ENCODE measurements at regions of chr7 and their contacts with region 1.

Region 1: GRCh38 chr7:73557108-73557396 is 438 bp downstream of the BCL7B start:
- DNase-seq: peak; percentile 80 to 99 (median 90)

Region 2: DNA sequence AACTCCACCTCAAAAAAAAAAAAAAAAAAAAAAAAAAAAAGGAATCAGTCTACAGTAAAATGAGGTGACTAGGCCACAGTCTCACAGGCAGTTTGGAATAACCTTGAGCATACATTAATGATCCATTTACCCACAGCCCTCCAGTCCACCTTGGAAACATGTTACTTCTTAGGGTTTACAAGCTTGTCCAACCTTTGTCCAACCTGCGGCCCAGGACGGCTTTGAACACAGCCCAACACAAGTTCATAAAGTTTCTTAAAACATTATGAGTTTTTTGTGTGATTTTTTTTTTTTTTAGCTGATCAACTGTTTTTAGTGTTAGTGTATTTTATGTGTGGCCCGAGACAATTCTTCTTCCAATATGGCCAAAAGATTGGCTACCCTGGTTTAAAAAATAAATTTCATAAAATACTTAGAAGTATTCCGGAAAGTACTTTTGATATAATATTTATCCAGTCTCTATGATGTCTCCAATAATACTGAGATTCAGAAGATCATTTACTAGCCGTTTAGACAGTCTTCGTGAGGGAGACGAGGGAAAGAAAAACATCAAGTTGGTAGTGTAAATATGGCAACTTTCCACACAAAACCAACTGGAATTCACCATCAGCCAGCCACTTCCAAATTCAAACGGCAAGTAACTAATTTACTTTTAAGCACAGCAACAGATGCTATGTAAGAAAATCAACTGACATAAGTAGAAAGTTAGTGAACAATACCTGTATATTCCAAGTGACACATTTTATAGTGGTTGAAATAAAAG is 44.9 kb before region 1 on chr7:
- intact Hi-C with region 1: no loop called
- DNase-seq: no peak

Region 3: GRCh38 chr7:73522105-73522872 is 34.8 kb before region 1 on chr7 and contains the start of gene BAZ1B:
- intact Hi-C with region 1: loop called (anchors 2 kb)
- DNase-seq: peak; percentile 96 to 100 (median 98)

Region 4: GRCh38 chr7:73578342-73579127 is 21.5 kb after region 1 on chr7 and contains the start of gene TBL2:
- intact Hi-C with region 1: loop called (anchors 1 kb)
- DNase-seq: peak; percentile 92 to 100 (median 98)

Region 5: GRCh38 chr7:73718905-73719805 is 162.1 kb after region 1 on chr7 and contains the start of gene STX1A:
- intact Hi-C with region 1: no loop called
- DNase-seq: peak in 7 of 10 donors; percentile 54 to 97 (median 71)

Measured in posterior cingulate gyrus (tissue), 11 donors.